SK-N-SH (cell line): ENCODE measurements at regions of chr6 and their contacts with region 1.

Region 1: DNA sequence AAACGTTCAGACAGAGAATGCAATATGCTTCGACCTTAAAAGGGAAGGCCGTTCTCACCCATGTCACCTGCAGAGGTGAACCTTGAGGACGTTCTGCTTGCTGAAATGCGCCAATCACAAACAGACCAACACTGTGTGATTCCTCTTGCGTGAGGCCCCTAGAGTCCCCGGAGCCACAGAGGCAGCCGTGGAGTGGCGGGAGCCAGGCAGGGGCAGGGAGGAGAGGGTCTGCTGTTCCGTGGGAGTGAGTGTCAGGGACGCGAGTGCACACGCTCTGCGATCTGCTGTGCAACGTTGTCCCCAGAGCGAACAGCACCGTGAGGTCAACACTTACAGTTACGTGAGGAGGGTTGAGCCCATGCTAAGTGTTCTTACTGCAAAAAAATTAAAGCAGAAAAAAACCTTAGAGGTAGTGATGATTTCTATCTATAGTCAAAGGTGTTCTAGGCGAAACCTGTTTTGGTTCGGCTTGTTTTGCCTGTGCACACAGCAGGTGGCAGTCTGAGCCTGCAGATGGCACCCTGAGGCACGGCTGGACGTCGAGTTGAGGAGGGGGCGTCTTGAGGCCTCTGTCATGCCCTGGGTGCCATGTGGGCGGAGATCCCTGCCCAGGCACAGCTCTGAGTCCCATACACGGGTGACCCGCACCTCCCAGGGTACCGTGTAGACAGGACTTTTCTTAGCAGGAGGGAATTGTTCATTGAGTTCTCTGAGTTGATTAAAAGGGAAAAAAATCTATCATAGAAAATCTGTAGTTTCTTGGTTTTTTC is 71.7 kb upstream of the FRMD1 start:
- DNase-seq: peak; percentile 75
- H3K4me3 ChIP-seq: no peak overlapping the region; a peak in 1 of 4 replicates
- H3K27ac ChIP-seq: no peak overlapping the region
- H3K4me1 ChIP-seq: no peaks in the 10 kb centered on the region; a peak in 1 of 4 replicates
- H3K27me3 ChIP-seq: no peaks in the 10 kb centered on the region
- CTCF ChIP-seq: no peak
- EP300 ChIP-seq: no peak
- RAD21 ChIP-seq: peak; percentile 90

Region 2: GRCh38 chr6:168171673-168172353 is 21.1 kb after region 1 on chr6:
- CTCF ChIA-PET with region 1: no interaction called
- POLR2A ChIA-PET with region 1: no interaction called
- DNase-seq: no peak
- H3K4me3 ChIP-seq: no peak overlapping the region
- H3K27ac ChIP-seq: no peak overlapping the region
- H3K4me1 ChIP-seq: no peaks in the 10 kb centered on the region
- H3K27me3 ChIP-seq: no peaks in the 10 kb centered on the region
- CTCF ChIP-seq: no peak
- EP300 ChIP-seq: no peak
- RAD21 ChIP-seq: no peak

Region 3: DNA sequence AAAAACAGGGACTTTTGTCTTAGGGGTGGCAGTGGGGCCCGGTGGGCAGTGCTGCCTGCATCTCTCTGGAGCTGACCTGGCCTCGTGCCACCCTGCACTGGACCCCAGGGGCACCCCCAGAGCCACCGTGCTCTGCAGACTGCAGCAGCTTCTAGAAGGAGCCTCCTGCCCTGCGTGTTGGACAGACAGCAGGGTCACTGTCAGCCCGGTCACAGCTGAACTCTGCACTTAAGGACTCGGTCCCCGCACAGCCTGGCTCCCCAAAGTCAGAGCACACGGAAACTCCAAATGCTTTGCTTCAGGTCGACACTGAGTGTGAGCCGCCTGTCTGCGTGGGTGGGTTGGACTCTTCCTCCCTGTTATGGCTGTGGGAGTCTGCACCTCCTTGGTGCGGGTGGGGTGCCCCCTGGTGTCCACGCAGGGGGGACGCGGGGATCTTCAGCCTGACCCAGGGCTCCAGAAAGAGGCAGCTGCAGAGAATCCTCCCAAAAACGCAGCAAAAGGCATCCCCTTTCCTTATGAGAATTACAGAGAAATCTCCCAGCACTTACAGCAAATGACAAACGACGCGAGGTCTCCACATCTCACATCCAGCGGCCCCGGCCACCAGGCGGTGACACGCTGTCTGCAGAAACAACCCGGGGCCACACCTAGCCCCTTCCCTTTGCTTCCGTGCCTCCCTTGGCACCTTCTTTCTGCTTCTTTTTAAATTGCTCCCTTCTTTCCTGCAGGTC is 205.1 kb after region 1 on chr6:
- CTCF ChIA-PET with region 1: interaction called, 25 read pairs
- POLR2A ChIA-PET with region 1: no interaction called
- DNase-seq: peak; percentile 92
- H3K4me3 ChIP-seq: peak overlapping the region in 1 of 2 experiments; percentile 37; a peak in 1 of 4 replicates
- H3K27ac ChIP-seq: no peak overlapping the region
- H3K4me1 ChIP-seq: peaks cover 0 to 3% of the 10 kb centered on the region in 2 experiments; a peak in 1 of 4 replicates
- H3K27me3 ChIP-seq: no peaks in the 10 kb centered on the region
- CTCF ChIP-seq: no peak
- EP300 ChIP-seq: no peak
- RAD21 ChIP-seq: peak; percentile 82

Region 4: GRCh38 chr6:168695701-168696100 is 545.0 kb after region 1 on chr6:
- CTCF ChIA-PET with region 1: no interaction called
- POLR2A ChIA-PET with region 1: no interaction called
- DNase-seq: no peak
- H3K4me3 ChIP-seq: no peak overlapping the region
- H3K27ac ChIP-seq: no peak overlapping the region
- H3K4me1 ChIP-seq: peaks cover 0 to 24% of the 10 kb centered on the region in 2 experiments; a peak in 1 of 4 replicates
- H3K27me3 ChIP-seq: no peaks in the 10 kb centered on the region
- CTCF ChIP-seq: no peak
- EP300 ChIP-seq: no peak
- RAD21 ChIP-seq: no peak